HAP-1 (cell line): ENCODE measurements at regions of chr7 and their contacts with region 1.

Region 1: GRCh38 chr7:39465055-39465929 is 100.9 kb upstream of the YAE1 start:
- DNase-seq: peak; percentile 79
- H3K4me3 ChIP-seq: no peak overlapping the region
- H3K4me1 ChIP-seq: peaks cover 28% of the 10 kb centered on the region
- H3K27me3 ChIP-seq: no peaks in the 10 kb centered on the region

Region 2: GRCh38 chr7:38796626-38797501 is 668.4 kb before region 1 on chr7:
- in situ Hi-C with region 1: loop called (anchors 10 kb)
- DNase-seq: peak; percentile 65 to 76
- H3K4me3 ChIP-seq: no peak overlapping the region
- H3K4me1 ChIP-seq: no peaks in the 10 kb centered on the region; the same call in 1 of the 2 replicates
- H3K27me3 ChIP-seq: no peaks in the 10 kb centered on the region

Region 3: DNA sequence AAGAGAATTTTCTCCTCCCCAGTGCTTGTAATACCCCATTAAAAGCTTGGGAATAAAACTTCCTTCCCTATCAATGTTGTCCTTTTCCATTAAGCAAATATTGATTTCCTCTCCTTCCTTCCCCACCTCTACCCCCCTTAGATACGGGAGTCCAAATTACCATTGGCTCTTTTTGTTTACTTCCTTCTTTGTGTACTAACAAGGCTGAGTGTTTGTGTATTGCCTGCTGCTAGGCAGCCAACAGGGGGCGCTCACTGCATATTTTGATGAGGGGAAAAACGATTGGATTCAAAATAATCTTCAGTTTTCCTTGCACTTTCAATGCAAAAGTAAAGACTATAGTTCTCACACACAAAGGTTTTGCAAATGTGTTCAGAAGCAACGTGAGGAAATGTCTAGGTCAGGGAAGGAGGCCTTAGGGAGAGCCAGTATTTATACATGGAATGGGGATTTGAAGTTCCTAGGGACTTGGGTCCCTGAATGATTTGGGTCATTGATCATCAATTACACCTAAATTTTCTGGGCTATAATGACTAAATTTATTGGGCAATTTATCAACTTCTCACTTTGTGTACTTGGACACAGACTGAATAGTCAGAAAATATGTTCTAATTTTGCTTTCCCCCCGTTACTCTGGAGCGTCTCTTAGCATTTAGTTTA is 532.7 kb before region 1 on chr7:
- in situ Hi-C with region 1: loop called (anchors 5 kb)
- DNase-seq: peak; percentile 80 to 93
- H3K4me3 ChIP-seq: no peak overlapping the region
- H3K4me1 ChIP-seq: peaks cover 20% of the 10 kb centered on the region
- H3K27me3 ChIP-seq: no peaks in the 10 kb centered on the region

Region 4: DNA sequence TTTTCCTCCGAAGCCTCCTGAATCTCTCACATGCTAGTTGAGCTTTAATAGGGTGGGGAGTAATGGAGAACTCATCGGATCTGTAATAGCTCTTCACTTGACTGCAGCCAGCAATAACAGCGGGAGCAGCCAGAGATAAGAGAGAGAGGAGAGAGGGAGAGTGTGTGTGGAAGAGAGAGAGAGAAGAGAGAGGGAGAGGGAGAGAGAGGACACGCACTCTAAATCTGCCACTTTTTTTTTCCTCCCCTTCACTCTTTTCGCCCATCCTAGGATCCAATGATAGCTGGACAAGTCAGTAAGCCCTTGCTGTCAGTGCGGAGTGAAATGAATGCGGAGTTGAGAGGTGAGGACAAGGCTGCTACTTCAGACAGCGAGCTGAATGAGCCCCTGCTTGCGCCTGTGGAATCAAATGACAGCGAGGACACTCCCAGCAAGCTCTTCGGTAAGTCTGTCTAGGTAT is 379.7 kb before region 1 on chr7:
- in situ Hi-C with region 1: no loop called
- DNase-seq: peak; percentile 81 to 84
- H3K4me3 ChIP-seq: peak overlapping the region; percentile 25
- H3K4me1 ChIP-seq: peaks cover 71% of the 10 kb centered on the region
- H3K27me3 ChIP-seq: no peaks in the 10 kb centered on the region